Naive thymus-derived CD8-positive, alpha-beta T cell (primary cell): ENCODE measurements at regions of chr17 and their contacts with region 1.

Region 1: DNA sequence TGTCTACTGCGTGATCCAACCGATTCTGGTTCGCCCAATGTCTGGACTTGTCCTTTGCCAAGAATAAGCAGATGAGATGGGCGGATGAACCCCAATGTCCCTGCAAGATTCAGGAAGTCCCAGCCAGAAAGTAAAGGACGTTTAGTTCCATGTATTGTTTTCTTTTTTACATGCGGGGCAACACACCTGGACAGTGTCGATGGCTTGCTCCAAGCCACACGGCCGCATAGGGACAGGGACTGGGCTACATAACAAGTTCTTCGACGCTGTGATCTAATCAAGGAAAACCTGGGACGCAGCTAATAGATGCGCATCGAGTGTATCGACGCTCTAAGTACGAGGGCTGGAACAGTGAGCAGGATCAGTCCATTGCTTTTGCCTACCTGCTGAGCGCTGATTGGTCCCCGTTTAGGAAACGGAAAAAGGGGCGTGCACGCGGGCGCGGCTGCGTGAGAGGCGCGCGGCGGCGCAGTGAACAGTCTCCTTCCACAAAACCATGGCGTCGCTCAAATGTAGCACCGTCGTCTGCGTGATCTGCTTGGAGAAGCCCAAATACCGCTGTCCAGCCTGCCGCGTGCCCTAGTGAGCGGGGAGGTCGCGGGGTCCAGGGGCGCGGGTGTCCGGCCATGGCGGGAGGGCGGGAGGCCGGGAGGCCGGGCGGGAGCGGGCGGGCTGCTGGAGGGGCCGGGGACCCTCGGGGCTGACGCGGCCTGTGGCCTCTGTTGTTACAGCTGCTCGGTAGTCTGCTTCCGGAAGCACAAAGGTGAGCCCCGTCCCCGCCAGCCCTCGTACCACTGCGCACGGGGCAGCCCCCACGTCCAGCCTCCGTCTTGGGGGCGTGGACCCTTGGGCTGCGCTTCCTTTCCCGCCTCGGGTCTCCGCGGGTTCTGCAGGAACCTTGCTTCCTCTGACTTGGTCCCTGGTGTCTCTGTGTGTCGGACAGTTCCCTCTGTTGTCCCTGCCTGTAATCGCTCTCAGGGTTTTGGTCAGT is at the start of gene ZNHIT3:
- DNase-seq: peak; percentile 80 to 94 (median 88)
- ATAC-seq: peak; percentile 90 to 97
- H3K4me3 Mint-ChIP-seq: peak within 1 kb of the TSS; percentile 94 to 100 (median 99)
- H3K27ac Mint-ChIP-seq: peak within 1 kb of the TSS; percentile 96 to 100 (median 99)
- H3K4me1 Mint-ChIP-seq: peaks cover 31 to 68% (median 61%) of the 10 kb centered on the region in 4 donors
- H3K27me3 Mint-ChIP-seq: peaks cover 2 to 12% (median 10%) of the 10 kb centered on the region in 5 donors
- polyA plus RNA-seq, gene ZNHIT3: 89.1 to 98.8 (median 91.2) TPM

Region 2: DNA sequence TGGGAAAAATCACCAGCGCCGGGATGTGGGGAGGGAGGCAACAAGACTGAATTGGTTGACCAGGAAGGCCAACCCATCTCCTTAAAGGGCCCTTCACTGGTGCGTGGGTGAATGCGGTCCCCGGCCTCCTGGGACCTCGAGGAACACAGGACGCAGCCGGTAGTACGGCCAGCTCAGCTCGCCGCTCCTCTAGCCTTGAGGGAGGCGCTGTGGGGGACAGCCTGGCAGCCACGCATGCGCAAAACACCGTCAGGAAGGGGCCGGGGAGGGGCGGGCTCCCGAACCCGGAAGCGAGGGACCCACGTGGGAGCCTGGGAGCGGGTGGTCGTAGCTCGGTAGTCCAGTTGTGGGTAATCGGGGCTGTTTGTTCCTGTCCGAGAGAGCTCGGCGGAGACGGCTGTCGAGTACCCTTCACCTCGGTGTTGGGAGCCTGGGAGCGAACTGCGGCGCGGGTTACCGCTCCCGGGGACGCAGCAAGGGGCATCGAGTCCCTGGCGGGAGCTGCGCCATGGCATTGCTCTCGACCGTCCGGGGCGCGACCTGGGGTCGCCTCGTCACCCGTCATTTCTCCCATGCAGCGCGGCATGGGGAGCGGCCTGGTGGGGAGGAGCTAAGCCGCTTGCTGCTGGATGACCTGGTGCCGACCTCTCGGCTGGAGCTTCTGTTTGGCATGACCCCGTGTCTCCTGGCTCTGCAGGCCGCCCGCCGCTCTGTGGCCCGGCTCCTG is 115.0 kb after region 1 on chr17 and contains the start of gene MRM1:
- POLR2A ChIA-PET with region 1: interaction called, 12 read pairs
- DNase-seq: peak; percentile 77 to 95 (median 86)
- ATAC-seq: peak; percentile 81 to 87
- H3K4me3 Mint-ChIP-seq: peak within 1 kb of the TSS; percentile 90 to 97 (median 93)
- H3K27ac Mint-ChIP-seq: peak within 1 kb of the TSS; percentile 93 to 99 (median 96)
- H3K4me1 Mint-ChIP-seq: peaks cover 31 to 45% (median 43%) of the 10 kb centered on the region in 4 donors
- H3K27me3 Mint-ChIP-seq: no peaks in the 10 kb centered on the region
- polyA plus RNA-seq, gene MRM1: 3.2 to 11.1 (median 6.8) TPM